Panc1 (cell line): ENCODE measurements at regions of chr11 and their contacts with region 1.

Region 1: DNA sequence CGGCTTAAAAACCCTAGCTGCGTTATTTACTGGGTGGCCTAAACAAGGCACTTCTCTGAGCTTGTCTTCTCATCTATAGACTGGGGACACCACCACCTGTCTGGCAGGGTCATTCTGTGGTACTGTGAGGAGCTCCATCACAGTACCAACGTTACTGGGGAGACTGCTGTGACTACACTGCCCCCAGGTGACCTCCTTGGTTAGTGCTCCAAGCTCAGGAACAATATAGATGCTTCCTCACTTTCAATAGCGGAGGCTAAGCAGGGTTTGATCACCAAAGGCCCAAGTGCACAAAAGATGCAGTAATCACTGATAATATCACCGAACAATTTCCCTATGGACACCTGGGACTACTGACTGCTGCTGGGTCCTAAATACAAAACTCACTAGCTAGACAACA is 18.8 kb downstream of the PRPF19 start:
- DNase-seq: no peak
- ATAC-seq: peak; percentile 95
- H3K4me3 ChIP-seq: no peak overlapping the region
- H3K27ac ChIP-seq: no peak overlapping the region
- H3K4me1 ChIP-seq: no peaks in the 10 kb centered on the region
- H3K27me3 ChIP-seq: no peaks in the 10 kb centered on the region
- CTCF ChIP-seq: peak; percentile 79

Region 2: DNA sequence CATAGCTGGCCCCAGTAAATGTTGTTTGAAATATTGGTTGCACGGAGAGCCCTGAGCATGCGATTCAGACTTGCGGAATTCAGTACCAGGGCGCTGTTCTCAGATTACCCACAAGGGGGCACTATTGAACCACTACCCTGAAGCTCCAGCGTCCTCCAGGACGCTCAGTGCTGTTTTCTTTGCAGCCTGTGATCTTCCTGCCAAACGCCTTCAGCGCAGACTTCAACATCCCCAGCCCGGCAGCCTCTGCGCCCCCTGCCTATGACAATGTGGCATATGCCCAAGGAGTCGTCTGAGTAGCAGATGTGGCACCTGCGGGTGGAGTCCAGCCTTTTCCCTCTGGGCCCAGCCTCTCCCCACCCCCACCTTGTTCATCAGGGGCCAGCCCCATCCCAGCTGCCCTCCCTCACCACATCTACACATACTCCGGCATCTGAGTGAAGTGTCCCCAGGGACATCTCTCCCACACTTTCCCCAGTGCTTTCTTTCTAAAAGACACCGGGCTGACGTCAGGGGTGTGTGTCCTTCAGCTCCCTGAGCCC is 112.1 kb before region 1 on chr11:
- CTCF ChIA-PET with region 1: interaction called, 20 read pairs
- POLR2A ChIA-PET with region 1: no interaction called
- in situ Hi-C with region 1: no loop called
- intact Hi-C with region 1: loop called (anchors 5 kb)
- DNase-seq: peak; percentile 80
- ATAC-seq: peak; percentile 91
- H3K4me3 ChIP-seq: no peak overlapping the region
- H3K27ac ChIP-seq: no peak overlapping the region
- H3K4me1 ChIP-seq: no peaks in the 10 kb centered on the region
- H3K27me3 ChIP-seq: no peaks in the 10 kb centered on the region
- CTCF ChIP-seq: peak; percentile 96

Region 3: GRCh38 chr11:60786811-60787567 is 100.6 kb before region 1 on chr11:
- CTCF ChIA-PET with region 1: interaction called, 10 read pairs
- POLR2A ChIA-PET with region 1: no interaction called
- in situ Hi-C with region 1: no loop called
- intact Hi-C with region 1: no loop called
- DNase-seq: no peak
- ATAC-seq: peak; percentile 44
- H3K4me3 ChIP-seq: no peak overlapping the region
- H3K27ac ChIP-seq: no peak overlapping the region
- H3K4me1 ChIP-seq: no peaks in the 10 kb centered on the region
- H3K27me3 ChIP-seq: no peaks in the 10 kb centered on the region
- CTCF ChIP-seq: no peak

Region 4: GRCh38 chr11:60831143-60831500 is 56.4 kb before region 1 on chr11:
- CTCF ChIA-PET with region 1: interaction called, 41 read pairs
- POLR2A ChIA-PET with region 1: no interaction called
- in situ Hi-C with region 1: no loop called
- intact Hi-C with region 1: loop called (anchors 1 kb)
- DNase-seq: peak; percentile 58
- ATAC-seq: peak; percentile 95
- H3K4me3 ChIP-seq: peak overlapping the region in 1 of 2 experiments; percentile 28; a peak in 2 of 4 replicates
- H3K27ac ChIP-seq: no peak overlapping the region
- H3K4me1 ChIP-seq: no peaks in the 10 kb centered on the region
- H3K27me3 ChIP-seq: peaks cover 8% of the 10 kb centered on the region
- CTCF ChIP-seq: peak; percentile 94